Activated naive CD4-positive, alpha-beta T cell treated with anti-CD3 and anti-CD28 coated beads for 36 hours (primary cell): ENCODE measurements at regions of chr2 and their contacts with region 1.

Region 1: DNA sequence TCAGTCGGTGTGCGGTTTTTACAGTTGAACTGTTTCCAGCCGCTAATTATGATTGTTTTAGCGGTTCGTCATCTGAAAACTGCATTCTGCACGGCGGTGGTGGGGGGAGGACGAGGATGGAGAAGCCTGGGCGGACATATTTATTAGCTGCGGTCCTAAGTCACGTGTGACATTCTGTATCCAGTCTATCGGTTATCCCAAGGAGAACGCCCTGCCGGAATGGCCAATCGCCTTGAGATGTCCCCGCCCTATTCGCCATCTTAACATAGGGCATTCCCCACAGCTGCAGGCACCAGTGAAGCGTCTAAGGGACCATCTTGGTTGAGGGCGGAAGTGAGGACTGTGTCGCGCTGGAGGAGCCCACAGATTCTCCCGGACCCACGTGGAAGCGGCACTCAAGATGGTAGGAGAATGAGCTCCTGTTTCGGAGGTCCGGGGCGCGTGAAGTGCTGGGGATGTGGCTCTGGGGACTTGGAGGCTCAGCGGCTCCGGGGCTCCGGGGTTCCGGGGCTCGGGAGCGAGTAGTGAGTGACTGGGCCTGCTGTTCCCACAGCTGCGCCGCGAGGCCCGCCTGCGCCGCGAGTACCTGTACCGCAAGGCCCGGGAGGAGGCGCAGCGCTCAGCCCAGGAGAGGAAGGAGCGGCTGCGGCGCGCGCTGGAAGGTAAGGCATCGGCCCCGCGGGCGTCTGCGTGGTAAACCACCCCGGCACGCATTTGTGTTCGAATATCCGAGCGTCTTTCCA is at the start of gene IMP4:
- DNase-seq: peak; percentile 97
- H3K4me3 Mint-ChIP-seq: peak within 1 kb of the TSS; percentile 99
- H3K27ac Mint-ChIP-seq: peak within 1 kb of the TSS; percentile 100
- H3K4me1 Mint-ChIP-seq: peaks cover 40% of the 10 kb centered on the region
- H3K27me3 Mint-ChIP-seq: no peaks in the 10 kb centered on the region
- total RNA-seq, gene IMP4: 120 to 128 TPM

Region 2: DNA sequence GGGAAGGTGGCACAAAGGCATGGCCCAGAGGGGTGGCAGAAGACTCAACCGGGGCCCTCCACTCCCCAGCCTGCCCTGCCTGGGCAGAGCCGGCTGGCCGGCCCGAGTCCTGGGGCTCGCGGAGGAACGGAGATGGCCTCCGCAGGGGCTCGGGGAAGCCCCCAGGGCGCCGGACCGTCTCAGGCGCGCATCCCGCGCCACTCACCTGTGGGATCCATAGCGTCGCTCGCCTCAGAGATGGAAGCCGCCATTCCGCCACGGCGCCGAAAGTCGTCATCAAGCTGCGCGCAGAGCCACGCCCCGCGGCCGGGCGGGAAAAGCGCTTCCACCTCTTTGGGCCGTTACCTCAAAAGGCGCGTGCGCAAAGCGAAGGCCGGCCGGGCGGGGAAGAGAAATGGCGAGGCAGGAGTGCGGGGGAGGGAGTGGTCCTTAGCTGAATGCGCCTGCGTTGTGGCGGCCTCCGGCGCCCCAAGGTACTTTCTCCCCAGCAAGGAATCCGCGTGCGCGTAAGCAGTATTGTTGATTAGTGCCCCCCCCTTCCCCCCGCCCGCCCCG is 161.3 kb before region 1 on chr2 and contains the start of gene SMPD4:
- CTCF ChIA-PET with region 1: interaction called, 7 read pairs
- intact Hi-C with region 1: loop called (anchors 1 kb)
- DNase-seq: peak; percentile 97
- H3K4me3 Mint-ChIP-seq: peak within 1 kb of the TSS; percentile 91
- H3K27ac Mint-ChIP-seq: peak within 1 kb of the TSS; percentile 94
- H3K4me1 Mint-ChIP-seq: peaks cover 31% of the 10 kb centered on the region
- H3K27me3 Mint-ChIP-seq: no peaks in the 10 kb centered on the region
- total RNA-seq, gene SMPD4: 70.8 to 71.5 TPM

Region 3: GRCh38 chr2:130355578-130356431 is 13.1 kb after region 1 on chr2 and contains the start of gene PTPN18:
- CTCF ChIA-PET with region 1: interaction called, 6 read pairs
- intact Hi-C with region 1: loop called (anchors 1 kb)
- DNase-seq: peak; percentile 54
- H3K4me3 Mint-ChIP-seq: peak within 1 kb of the TSS; percentile 74
- H3K27ac Mint-ChIP-seq: no peak within 1 kb of the TSS
- H3K4me1 Mint-ChIP-seq: peaks cover 5% of the 10 kb centered on the region
- H3K27me3 Mint-ChIP-seq: no peaks in the 10 kb centered on the region
- total RNA-seq, gene PTPN18: 24.7 to 25.3 TPM

Region 4: DNA sequence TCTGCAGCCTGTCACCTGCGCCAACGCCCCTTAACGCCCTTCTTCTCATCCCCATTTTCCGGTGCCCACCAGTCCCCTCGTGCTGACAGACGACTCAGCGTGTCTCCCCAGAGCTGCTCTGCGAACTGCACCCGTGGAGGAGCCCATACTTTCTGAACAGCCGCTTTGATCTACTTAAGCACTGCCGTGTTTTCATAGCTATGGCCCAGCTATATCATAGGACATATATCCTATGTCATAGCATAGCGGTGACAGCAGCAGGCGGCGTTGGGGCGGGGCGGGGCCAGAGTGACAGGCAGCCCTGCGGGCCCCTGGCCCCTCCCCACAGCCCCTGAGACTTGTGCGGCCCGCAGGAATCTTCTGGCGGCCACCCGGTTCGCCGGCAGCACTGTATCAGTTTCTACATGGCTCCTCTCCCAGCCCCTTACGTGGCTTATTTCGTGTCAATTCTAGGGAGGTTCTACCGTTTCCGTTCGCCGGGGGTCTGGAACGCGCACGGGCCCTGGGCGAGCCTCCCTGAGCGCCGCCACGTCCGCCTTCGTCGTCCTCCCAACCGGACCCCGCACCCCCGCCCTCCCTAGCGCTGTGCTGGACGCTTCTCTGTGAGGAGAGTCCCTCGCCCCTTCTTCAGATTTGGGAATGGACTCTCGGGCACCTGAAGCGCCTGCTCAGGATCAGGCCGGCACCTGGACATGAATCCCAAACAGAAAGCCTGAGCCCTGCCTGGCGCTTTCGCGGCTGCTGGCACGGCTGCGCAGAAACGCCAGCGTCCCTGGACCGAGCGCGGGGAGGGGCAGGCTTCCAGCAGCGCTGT is 48.6 kb after region 1 on chr2:
- CTCF ChIA-PET with region 1: no interaction called
- intact Hi-C with region 1: loop called (anchors 1 kb)
- DNase-seq: peak; percentile 83
- H3K4me3 Mint-ChIP-seq: peak overlapping the region; percentile 71
- H3K27ac Mint-ChIP-seq: no peak overlapping the region
- H3K4me1 Mint-ChIP-seq: peaks cover 3% of the 10 kb centered on the region
- H3K27me3 Mint-ChIP-seq: peaks cover 15% of the 10 kb centered on the region

Region 5: DNA sequence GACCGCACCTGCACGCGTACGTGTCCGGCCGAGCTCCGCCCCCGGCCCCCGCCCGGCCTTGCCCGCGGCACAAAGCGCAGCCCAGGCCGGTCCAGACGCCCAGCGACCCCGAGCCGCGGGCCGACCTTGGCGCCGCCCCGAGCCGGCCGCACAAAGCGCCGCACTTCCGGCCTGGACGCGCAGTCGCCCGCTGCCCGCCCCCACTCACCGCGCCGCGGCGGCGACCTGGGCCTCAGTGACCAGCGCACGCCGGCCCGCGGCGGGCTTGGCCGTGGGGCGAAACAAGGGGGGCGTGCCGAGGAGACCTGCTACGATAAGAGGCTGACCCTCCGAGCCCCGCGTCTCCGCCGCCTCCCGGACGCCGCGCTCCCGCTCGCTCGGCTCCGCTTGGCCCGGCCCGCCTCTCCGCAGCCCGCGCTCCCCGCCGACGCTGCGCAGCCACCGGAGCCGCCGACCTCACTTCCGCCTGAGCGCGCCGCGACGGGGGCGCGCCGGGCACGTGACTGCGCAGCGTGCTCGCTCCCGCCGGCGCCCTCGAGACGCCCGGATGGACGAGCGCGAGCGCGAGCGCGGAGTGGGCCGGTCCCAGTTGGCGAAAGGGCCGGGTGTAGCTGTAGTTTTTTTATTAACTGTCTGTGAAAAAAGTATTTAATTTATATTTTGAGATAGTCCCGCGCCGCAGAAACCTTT is 750.4 kb after region 1 on chr2 and contains the start of gene FAM168B:
- CTCF ChIA-PET with region 1: no interaction called
- intact Hi-C with region 1: loop called (anchors 1 kb)
- DNase-seq: peak; percentile 86
- H3K4me3 Mint-ChIP-seq: peak within 1 kb of the TSS; percentile 85
- H3K27ac Mint-ChIP-seq: peak within 1 kb of the TSS; percentile 92
- H3K4me1 Mint-ChIP-seq: peaks cover 20% of the 10 kb centered on the region
- H3K27me3 Mint-ChIP-seq: no peaks in the 10 kb centered on the region
- total RNA-seq, gene FAM168B: 52.7 to 55.0 TPM